ENCODE measurements at regions of chr17 and their contacts with region 1.

Region 1: DNA sequence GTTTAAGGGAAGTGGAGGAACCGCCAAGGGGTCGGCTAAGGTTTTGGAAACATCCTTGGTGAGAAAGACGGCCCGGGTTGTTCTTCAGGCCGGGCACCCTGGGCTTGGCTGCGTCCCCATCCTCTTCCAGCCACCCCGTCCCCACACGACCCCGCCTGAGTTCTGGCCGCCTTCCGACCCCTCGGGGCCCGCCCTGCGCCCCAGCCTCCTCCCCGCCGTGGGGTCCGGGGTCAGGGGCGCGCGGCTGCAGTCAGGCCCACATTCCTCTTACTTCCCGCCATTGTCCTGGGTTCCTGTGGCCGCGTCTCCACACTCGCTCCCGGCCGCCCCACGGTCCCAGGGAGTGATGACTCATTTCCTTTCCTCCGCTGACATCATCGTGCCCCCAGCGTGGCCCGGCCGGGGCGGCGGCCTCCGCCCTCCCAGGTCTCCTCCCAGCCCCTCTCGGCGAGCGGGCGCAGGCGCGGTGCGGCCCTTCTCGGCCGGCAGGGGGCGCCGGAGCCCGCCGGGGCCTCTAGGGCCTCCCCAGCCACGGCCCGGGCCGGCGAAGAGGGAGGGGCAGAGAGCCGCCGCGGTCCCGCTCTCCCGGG is 59.6 kb downstream of the WSB1 start:
- DNase-seq: peak; percentile 94
- ATAC-seq: peak; percentile 90
- H3K4me3 Mint-ChIP-seq: peak overlapping the region; percentile 85
- H3K27ac Mint-ChIP-seq: peak overlapping the region; percentile 95
- H3K4me1 Mint-ChIP-seq: peaks cover 25% of the 10 kb centered on the region
- H3K27me3 Mint-ChIP-seq: no peaks in the 10 kb centered on the region

Region 2: DNA sequence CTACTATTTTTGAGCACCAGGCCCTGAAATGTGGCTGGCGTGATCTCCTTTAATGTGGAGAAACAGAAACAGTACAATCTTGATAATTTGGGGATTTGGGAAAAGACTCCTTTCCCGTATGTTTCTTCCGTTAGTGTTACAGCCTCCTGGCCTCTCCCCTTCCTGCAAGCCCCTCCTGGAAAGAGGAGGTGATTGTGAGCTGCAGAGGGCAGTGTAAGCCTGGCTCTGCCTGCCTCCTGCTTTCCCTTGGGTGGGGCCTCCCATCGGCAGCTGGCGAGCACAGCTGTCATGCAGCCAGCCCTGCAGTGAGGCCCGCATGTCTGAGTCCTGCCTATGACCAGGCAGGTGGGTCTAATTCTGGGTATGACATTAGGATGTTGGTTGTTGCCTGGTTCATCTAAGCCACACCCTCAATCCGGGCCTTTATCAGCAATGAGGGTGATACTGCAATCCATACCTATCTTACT is 108.3 kb before region 1 on chr17:
- CTCF ChIA-PET with region 1: interaction called, 3 read pairs
- POLR2A ChIA-PET with region 1: no interaction called
- intact Hi-C with region 1: loop called in 1 of 2 experiments (anchors 1 kb)
- DNase-seq: peak; percentile 78
- ATAC-seq: peak; percentile 96
- H3K4me3 Mint-ChIP-seq: no peak overlapping the region
- H3K27ac Mint-ChIP-seq: no peak overlapping the region
- H3K4me1 Mint-ChIP-seq: peaks cover 14% of the 10 kb centered on the region
- H3K27me3 Mint-ChIP-seq: peaks cover 12% of the 10 kb centered on the region

Region 3: GRCh38 chr17:27293898-27294688 is 59.5 kb before region 1 on chr17 and contains the start of gene WSB1:
- CTCF ChIA-PET with region 1: interaction called, 3 read pairs
- POLR2A ChIA-PET with region 1: interaction called, 4 read pairs
- intact Hi-C with region 1: loop called (anchors 1 kb)
- DNase-seq: peak; percentile 96
- ATAC-seq: peak; percentile 86
- H3K4me3 Mint-ChIP-seq: peak within 1 kb of the TSS; percentile 89
- H3K27ac Mint-ChIP-seq: peak within 1 kb of the TSS; percentile 99
- H3K4me1 Mint-ChIP-seq: peaks cover 32% of the 10 kb centered on the region
- H3K27me3 Mint-ChIP-seq: no peaks in the 10 kb centered on the region
- total RNA-seq, gene WSB1: 145 to 190 TPM

Region 4: DNA sequence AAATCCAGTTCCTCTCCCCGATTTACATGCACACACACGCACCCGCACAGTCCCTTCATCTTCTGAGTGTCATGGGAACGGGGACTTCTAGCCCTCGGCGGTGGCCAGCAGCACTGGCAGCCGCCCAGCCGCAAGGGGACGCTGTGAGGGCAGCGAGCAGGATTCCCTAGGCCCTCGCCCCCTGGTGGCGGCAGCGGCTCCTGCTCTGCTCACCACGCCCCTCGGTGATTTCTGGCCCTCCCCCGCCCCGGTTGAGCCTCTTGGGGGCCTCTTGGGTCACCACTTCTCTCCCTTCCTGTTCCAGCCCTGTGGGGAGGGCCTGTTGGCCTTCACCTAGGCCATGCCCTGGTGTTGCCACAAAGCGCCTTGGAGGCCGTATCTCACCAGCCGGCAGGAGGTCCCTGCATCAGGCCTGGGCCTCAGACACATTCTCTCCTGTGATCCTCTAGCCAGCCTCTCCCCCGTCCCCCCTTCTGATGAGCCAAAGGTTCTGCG is 27.5 kb after region 1 on chr17:
- CTCF ChIA-PET with region 1: interaction called, 5 read pairs
- POLR2A ChIA-PET with region 1: no interaction called
- intact Hi-C with region 1: loop called in 1 of 2 experiments (anchors 1 kb)
- DNase-seq: peak; percentile 94
- ATAC-seq: peak; percentile 96
- H3K4me3 Mint-ChIP-seq: no peak overlapping the region
- H3K27ac Mint-ChIP-seq: no peak overlapping the region
- H3K4me1 Mint-ChIP-seq: peaks cover 2% of the 10 kb centered on the region
- H3K27me3 Mint-ChIP-seq: peaks cover 23% of the 10 kb centered on the region

Region 5: DNA sequence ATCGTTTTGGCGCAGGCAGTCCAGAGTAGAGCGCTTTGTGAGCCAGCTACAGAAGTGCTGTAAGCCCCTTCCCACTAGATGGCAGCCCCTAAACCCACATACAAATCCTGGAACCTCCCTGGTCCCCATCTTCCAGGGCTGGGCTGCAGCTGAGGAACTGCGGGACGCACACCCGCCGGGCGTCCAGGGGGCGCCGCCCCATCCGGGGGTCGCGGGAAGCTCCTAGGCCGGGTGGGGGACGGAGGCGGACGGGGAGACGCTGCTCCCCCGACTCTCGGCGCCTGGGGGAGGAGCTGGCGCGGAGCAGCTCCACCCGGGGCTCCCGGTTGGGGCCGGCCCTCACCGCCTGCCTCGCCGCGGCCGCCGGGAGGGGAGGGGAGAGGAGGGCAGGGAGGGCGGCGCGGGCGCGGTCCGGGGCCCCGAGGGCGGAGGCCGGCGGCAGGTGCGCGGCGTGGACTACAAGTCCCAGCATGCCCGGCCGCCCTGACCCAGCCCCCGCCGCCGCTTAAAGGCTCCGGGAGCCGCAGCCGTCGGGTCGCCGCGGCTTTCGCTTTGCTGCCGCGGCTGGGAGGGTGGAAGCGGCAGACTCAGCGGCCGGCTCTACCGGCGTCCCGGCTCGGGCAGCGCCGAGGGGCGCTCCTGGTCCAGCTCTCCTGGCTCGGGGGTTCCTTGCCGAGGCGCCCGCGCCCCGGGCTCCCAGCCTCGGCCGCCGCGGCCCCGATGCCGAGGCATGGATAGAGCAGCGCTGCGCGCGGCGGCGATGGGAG is 102.5 kb after region 1 on chr17 and contains the start of gene KSR1:
- CTCF ChIA-PET with region 1: interaction called, 3 read pairs
- POLR2A ChIA-PET with region 1: no interaction called
- intact Hi-C with region 1: loop called (anchors 1 to 5 kb)
- DNase-seq: peak; percentile 92
- ATAC-seq: peak; percentile 93
- H3K4me3 Mint-ChIP-seq: peak within 1 kb of the TSS; percentile 88
- H3K27ac Mint-ChIP-seq: peak within 1 kb of the TSS; percentile 83
- H3K4me1 Mint-ChIP-seq: peaks cover 43% of the 10 kb centered on the region
- H3K27me3 Mint-ChIP-seq: peaks cover 6% of the 10 kb centered on the region
- total RNA-seq, gene KSR1: 96.6 to 113 TPM